Activated T-helper 1 cell treated with anti-CD3 and anti-CD28 coated beads, Interleukin-12 subunit alpha, Interleukin-12 subunit beta, Interleukin-2, Interleukin-4 antibody, amounts not matched to agents 30 ng/mL and 10 ng/mL and 1 ng/mL, durations not matched to agents 14 hours and 24 hours and 36 hours (primary cell): ENCODE measurements at regions of chr11 and their contacts with region 1.

Region 1: DNA sequence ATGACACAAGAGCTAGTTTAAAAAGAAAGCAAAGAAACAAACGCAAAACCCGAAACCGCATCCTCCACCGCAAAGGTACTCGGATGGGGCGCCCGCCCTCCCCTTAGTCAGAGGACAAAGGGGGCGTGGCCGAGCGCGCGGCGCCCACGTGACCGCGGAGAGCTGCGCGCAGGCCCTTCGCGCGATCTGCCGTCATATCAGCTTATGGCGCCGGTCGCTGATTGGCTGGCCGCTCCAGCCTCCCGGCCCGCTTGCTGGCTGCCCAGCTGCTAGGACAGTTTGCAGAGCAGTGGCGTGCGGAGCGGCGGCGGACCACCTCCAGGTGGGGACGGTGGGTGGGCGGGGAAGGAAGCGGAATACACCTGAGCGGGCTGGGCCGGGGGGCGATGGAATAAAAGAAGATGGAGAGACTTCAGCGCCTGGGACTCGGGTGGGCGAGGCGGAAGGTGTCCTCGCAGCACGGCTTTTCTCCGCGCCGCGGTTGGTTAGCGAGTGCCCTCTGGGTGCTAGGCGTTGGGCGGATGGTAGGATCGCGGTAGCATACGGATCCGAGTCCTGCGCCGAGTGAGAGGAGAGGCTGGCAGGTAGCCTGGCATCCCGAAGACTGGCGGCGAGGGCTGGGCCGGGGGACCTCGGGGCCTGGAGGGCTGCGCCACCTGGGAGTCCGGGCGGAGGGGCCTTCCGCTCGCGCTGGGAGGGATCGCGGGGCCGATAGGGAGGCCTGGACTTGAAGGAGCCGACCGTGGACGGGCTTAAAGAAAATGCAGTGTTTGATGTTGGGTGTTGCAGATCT is at the start of gene SC5D:
- DNase-seq: peak; percentile 94
- H3K4me3 Mint-ChIP-seq: peak within 1 kb of the TSS; percentile 93
- H3K27ac Mint-ChIP-seq: peak within 1 kb of the TSS; percentile 97
- H3K4me1 Mint-ChIP-seq: peaks cover 53% of the 10 kb centered on the region
- H3K27me3 Mint-ChIP-seq: peaks cover 10% of the 10 kb centered on the region
- total RNA-seq, gene SC5D: 21.9 and 26.3 TPM in 2 replicates

Region 2: GRCh38 chr11:121023848-121024751 is 268.6 kb before region 1 on chr11 and contains the start of gene TBCEL:
- intact Hi-C with region 1: loop called (anchors 5 kb)
- DNase-seq: peak; percentile 77
- H3K4me3 Mint-ChIP-seq: peak within 1 kb of the TSS; percentile 89
- H3K27ac Mint-ChIP-seq: peak within 1 kb of the TSS; percentile 86
- H3K4me1 Mint-ChIP-seq: peaks cover 24% of the 10 kb centered on the region
- H3K27me3 Mint-ChIP-seq: peaks cover 8% of the 10 kb centered on the region
- total RNA-seq, gene TBCEL: 11.1 and 12.5 TPM in 2 replicates

Region 3: GRCh38 chr11:121213362-121213893 is 79.3 kb before region 1 on chr11:
- intact Hi-C with region 1: no loop called
- DNase-seq: no peak
- H3K4me3 Mint-ChIP-seq: no peak overlapping the region
- H3K27ac Mint-ChIP-seq: no peak overlapping the region
- H3K4me1 Mint-ChIP-seq: no peaks in the 10 kb centered on the region
- H3K27me3 Mint-ChIP-seq: peaks cover 14% of the 10 kb centered on the region

Region 4: DNA sequence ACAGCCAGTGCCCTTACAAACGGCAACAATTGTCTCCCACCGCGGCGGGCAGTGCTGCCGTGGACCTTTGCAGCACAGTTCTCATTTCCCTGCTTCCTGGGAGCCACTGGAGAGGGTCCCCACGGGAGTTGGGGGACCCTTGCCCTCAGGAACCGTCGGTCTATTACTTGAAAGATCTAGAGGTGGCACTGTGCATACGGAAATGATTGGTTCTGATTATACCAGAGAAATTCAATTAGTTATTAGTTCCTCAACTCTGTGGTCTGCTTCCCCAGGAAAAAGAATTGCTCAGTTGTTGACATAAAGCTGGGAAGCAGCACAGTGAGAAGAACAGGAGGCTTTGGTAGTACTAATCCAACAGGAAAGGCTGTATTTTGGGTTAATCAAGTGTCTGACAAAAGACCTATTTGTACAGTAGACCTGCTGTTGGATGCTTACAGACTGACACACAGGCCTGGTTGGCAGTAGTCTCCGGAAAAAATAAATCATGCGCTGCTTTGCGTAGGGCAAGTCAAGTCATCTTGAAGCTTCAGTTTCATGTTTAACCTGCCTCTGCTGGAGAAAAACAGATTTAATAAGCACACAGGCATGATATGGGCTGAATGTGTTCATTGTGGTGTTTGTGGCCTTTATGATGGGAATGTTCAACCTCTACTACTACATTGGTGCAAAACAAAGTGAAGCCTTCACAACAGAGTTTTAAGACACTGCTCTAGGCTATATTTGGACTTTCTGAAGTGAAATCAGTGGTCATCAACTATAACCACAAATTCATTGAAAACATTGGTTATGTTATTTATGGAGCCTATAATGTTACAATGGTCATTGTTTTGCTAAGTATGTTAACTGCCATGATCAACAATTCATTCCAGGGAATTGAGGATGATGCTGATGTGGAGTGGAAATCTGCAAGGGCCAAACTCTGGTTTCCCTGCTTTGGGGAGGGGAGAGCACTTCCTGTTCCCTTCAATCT is 54.7 kb before region 1 on chr11:
- intact Hi-C with region 1: loop called (anchors 1 kb)
- DNase-seq: no peak
- H3K4me3 Mint-ChIP-seq: no peak overlapping the region
- H3K27ac Mint-ChIP-seq: no peak overlapping the region
- H3K4me1 Mint-ChIP-seq: peaks cover 30% of the 10 kb centered on the region
- H3K27me3 Mint-ChIP-seq: peaks cover 16% of the 10 kb centered on the region

Region 5: GRCh38 chr11:121249039-121249663 is 43.5 kb before region 1 on chr11:
- intact Hi-C with region 1: loop called (anchors 2 kb)
- DNase-seq: no peak
- H3K4me3 Mint-ChIP-seq: no peak overlapping the region
- H3K27ac Mint-ChIP-seq: no peak overlapping the region
- H3K4me1 Mint-ChIP-seq: no peaks in the 10 kb centered on the region
- H3K27me3 Mint-ChIP-seq: peaks cover 5% of the 10 kb centered on the region

Region 6: DNA sequence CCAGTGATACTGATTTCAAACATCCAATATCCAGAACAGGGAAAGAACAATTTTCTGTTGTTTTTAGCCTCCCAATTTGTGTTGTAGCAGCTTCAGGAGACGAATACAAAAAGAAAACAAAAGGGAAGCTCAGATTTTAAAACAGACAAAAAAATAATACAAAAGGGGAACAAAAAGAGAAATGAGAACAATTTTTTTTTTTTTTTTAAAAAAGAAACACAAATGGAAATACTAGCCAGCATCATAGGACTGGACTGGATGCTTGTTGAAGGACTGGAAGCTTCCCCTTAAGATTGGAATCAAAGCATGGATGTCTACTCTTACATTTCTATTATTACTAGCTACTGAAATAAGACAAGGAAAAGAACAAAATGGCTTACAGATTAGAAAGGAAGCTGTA is 113.0 kb after region 1 on chr11:
- intact Hi-C with region 1: no loop called
- DNase-seq: no peak
- H3K4me3 Mint-ChIP-seq: no peak overlapping the region
- H3K27ac Mint-ChIP-seq: no peak overlapping the region
- H3K4me1 Mint-ChIP-seq: no peaks in the 10 kb centered on the region
- H3K27me3 Mint-ChIP-seq: no peaks in the 10 kb centered on the region

Region 7: GRCh38 chr11:121417055-121417551 is 124.4 kb after region 1 on chr11:
- intact Hi-C with region 1: loop called (anchors 5 kb)
- DNase-seq: peak; percentile 27
- H3K4me3 Mint-ChIP-seq: peak overlapping the region; percentile 12
- H3K27ac Mint-ChIP-seq: peak overlapping the region; percentile 40
- H3K4me1 Mint-ChIP-seq: peaks cover 65% of the 10 kb centered on the region
- H3K27me3 Mint-ChIP-seq: no peaks in the 10 kb centered on the region

Region 8: GRCh38 chr11:121446752-121447156 is 154.1 kb after region 1 on chr11:
- intact Hi-C with region 1: no loop called
- DNase-seq: no peak
- H3K4me3 Mint-ChIP-seq: no peak overlapping the region
- H3K27ac Mint-ChIP-seq: peak overlapping the region; percentile 51
- H3K4me1 Mint-ChIP-seq: peaks cover 76% of the 10 kb centered on the region
- H3K27me3 Mint-ChIP-seq: no peaks in the 10 kb centered on the region